ENCODE measurements at regions of chr6 and their contacts with region 1.

Region 1: DNA sequence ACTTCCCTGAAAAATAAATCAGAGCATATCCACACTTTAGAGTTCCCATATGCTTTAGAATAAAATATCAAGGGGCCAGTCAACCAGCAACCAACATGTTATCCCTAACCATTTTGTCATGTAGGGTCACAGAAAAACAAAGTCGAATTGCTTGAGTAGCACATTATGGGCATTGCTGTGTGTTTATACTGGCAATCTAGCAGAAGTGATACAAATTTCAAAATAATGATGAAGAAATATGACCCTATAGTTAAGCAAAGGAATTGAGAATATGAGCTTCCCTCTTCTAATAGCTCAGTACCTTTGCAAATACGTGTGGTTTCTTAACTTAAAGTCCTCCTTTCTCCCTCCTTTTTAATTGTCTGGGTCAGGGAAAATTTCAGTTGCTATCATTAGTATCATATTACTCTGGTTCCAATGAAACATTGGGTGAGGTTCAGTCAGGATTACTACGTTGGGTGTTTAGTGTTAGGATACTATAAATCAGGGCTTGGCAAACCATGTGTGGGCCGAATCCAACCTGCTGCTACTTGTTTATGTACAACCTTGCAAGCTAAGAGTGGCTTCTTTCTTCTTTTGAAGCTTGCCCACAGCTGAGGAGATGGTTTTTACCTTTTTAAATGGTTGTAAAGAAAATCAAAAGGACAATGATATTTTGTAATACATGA is 166.8 kb upstream of the CARMIL1 start:
- H3K4me3 ChIP-seq: no peak overlapping the region
- H3K27ac ChIP-seq: no peak overlapping the region
- H3K4me1 ChIP-seq: 0 out of 2 replicates have a peak, but pooled peaks cover 2% of the 10 kb centered on the region
- CTCF ChIP-seq: no peak

Region 2: DNA sequence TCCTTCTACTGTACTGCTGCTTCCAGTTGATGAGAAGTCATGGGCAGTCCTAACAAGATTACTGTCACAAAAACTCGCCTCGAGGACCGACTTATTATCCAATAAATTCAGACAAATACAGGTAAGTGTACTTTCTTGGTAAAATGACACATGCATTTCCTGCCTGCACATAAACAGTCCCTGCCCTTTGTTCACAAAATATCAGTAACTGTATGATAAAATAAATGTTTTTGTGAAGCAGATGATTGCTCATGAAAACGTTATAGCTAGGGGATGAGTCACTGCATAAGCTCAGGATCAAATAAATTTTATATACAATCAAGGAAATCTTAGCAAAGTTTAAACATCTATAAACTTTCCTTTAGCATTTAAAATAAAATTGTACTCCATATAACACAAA is 12.1 kb before region 1 on chr6:
- CTCF ChIA-PET with region 1: no interaction called
- POLR2A ChIA-PET with region 1: no interaction called
- H3K4me3 ChIP-seq: no peak overlapping the region
- H3K27ac ChIP-seq: no peak overlapping the region
- H3K4me1 ChIP-seq: no peaks in the 10 kb centered on the region; the same call in 1 of the 2 replicates
- CTCF ChIP-seq: no peak

Region 3: DNA sequence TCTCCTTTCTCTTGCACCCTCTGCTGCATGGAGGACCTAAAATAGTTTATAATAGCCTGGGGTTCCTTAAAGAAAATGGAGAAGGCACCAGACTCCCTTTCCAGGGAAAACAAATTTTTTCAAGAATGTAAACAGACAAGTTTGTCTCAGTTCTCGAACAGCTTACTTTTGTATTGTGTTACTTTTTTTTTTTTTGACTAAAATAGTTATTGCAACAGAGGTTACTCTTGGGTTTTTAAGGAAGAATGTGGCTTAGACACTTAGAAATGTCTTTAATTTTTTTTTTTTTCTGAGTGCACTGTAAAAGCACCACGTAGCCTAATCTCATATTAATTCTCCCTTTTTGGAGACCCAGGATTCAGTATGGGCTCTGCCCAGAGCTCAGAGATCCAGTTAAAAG is 18.2 kb after region 1 on chr6:
- CTCF ChIA-PET with region 1: no interaction called
- POLR2A ChIA-PET with region 1: interaction called, 13 read pairs
- H3K4me3 ChIP-seq: no peak overlapping the region
- H3K27ac ChIP-seq: no peak overlapping the region
- H3K4me1 ChIP-seq: no peaks in the 10 kb centered on the region
- CTCF ChIP-seq: no peak

Measured in HEK293 (cell line).